ENCODE measurements at regions of chr10 and their contacts with region 1.

Region 1: DNA sequence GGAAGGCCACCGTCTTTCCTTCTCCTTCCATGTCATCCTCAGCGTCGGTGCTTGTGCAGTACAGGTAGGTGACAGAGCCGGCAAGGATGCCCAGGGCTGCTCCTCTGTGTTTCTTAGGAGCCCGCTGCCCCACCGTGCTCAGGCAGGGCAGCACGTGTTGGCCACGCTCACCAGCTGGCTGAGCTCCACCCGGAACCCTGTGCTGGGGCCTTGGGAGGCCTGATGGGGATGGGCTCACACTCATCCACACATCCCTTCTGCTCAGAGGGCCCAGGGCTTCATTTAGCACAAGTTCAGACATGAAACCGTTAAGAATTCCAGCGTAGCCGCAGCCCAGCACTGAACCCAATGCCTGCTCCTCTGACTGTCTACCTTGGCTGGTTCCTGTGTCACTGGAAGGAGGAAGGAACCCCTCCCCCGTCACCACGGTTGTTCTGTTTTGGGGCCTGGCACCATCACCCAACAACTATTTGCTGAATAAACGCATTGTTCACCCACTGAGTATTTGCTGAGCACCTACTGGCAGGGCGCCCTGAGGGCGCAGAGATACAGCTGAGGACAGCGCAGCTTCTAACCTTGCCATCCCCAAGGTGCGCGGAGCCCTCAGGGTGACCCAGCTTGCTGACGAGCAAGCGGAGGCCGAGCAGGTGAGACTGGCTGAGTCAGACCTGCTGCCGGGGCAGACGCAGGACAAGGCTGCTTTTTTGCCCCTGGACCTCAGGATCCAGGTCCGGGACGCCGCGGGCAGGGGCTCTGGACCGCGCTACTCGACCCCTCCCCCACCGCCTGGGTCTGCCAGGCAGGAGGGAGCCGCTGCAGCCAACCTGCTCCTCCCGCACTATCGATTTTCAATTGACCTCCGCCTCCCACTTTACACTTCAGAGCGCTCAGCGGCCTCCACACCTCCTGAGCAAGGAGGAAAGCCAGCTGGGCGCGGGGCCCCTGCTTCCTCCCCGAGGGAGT is 50.6 kb upstream of the RET start:
- DNase-seq: no peak
- H3K4me3 ChIP-seq: no peak overlapping the region
- H3K27ac ChIP-seq: no peak overlapping the region
- H3K4me1 ChIP-seq: no peaks in the 10 kb centered on the region
- H3K27me3 ChIP-seq: no peaks in the 10 kb centered on the region
- CTCF ChIP-seq: no peak
- POLR2A ChIP-seq: no peak

Region 2: GRCh38 chr10:43045631-43046287 is 19.5 kb after region 1 on chr10:
- intact Hi-C with region 1: loop called (anchors 2 kb)
- DNase-seq: no peak
- H3K4me3 ChIP-seq: no peak overlapping the region
- H3K27ac ChIP-seq: no peak overlapping the region
- H3K4me1 ChIP-seq: no peaks in the 10 kb centered on the region
- H3K27me3 ChIP-seq: no peaks in the 10 kb centered on the region
- CTCF ChIP-seq: no peak
- POLR2A ChIP-seq: no peak

Measured in vagina (tissue), 2 donors.